A673 (cell line): ENCODE measurements at regions of chr17 and their contacts with region 1.

Region 1: GRCh38 chr17:27332485-27333409 is 38.8 kb downstream of the WSB1 start:
- DNase-seq: peak; percentile 95
- H3K4me3 ChIP-seq: peak overlapping the region; percentile 46
- H3K27ac ChIP-seq: peak overlapping the region; percentile 68
- H3K4me1 ChIP-seq: peaks cover 15% of the 10 kb centered on the region
- H3K27me3 ChIP-seq: no peaks in the 10 kb centered on the region
- CTCF ChIP-seq: peak; percentile 84

Region 2: GRCh38 chr17:27236717-27237315 is 95.9 kb before region 1 on chr17:
- CTCF ChIA-PET with region 1: interaction called, 14 read pairs
- POLR2A ChIA-PET with region 1: no interaction called
- intact Hi-C with region 1: no loop called
- DNase-seq: peak; percentile 71
- H3K4me3 ChIP-seq: no peak overlapping the region
- H3K27ac ChIP-seq: no peak overlapping the region
- H3K4me1 ChIP-seq: peaks cover 2% of the 10 kb centered on the region
- H3K27me3 ChIP-seq: no peaks in the 10 kb centered on the region
- CTCF ChIP-seq: peak; percentile 91

Region 3: DNA sequence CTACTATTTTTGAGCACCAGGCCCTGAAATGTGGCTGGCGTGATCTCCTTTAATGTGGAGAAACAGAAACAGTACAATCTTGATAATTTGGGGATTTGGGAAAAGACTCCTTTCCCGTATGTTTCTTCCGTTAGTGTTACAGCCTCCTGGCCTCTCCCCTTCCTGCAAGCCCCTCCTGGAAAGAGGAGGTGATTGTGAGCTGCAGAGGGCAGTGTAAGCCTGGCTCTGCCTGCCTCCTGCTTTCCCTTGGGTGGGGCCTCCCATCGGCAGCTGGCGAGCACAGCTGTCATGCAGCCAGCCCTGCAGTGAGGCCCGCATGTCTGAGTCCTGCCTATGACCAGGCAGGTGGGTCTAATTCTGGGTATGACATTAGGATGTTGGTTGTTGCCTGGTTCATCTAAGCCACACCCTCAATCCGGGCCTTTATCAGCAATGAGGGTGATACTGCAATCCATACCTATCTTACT is 87.5 kb before region 1 on chr17:
- CTCF ChIA-PET with region 1: interaction called, 5 read pairs
- POLR2A ChIA-PET with region 1: no interaction called
- intact Hi-C with region 1: loop called (anchors 1 kb)
- DNase-seq: peak; percentile 91
- H3K4me3 ChIP-seq: peak overlapping the region; percentile 9
- H3K27ac ChIP-seq: peak overlapping the region; percentile 70
- H3K4me1 ChIP-seq: peaks cover 19% of the 10 kb centered on the region
- H3K27me3 ChIP-seq: no peaks in the 10 kb centered on the region
- CTCF ChIP-seq: peak; percentile 82

Region 4: GRCh38 chr17:27282054-27282551 is 50.6 kb before region 1 on chr17:
- CTCF ChIA-PET with region 1: no interaction called
- POLR2A ChIA-PET with region 1: no interaction called
- intact Hi-C with region 1: no loop called
- DNase-seq: no peak
- H3K4me3 ChIP-seq: no peak overlapping the region
- H3K27ac ChIP-seq: no peak overlapping the region
- H3K4me1 ChIP-seq: no peaks in the 10 kb centered on the region
- H3K27me3 ChIP-seq: no peaks in the 10 kb centered on the region
- CTCF ChIP-seq: no peak